Left ventricle myocardium superior (tissue), 1 donor: ENCODE measurements at regions of chr4 and their contacts with region 1.

Region 1: GRCh38 chr4:183261953-183262775 is 57.9 kb downstream of the CLDN22 start:
- DNase-seq: peak; percentile 82
- ATAC-seq: peak; percentile 98

Region 2: DNA sequence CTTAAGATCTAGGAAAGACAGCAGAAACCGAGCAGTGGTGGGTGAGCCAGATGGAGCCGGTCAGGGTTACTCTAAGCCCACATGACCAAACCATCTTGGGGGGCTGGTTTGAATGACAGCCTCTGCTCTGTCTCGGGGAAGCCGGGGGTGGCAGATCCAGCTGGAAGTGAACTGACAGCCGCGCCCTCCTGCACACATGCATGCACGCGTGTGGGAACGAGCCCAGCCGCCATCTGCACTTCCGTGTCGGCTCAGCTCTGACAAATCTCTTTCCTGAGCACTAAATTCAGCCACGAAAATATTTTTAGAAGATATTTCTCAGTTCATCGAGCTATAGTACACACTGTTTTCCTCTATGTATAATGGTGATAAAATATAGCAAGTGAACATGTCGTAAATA is 460.5 kb before region 1 on chr4:
- intact Hi-C with region 1: no loop called
- DNase-seq: no peak
- ATAC-seq: no peak

Region 3: GRCh38 chr4:182938205-182938645 is 323.9 kb before region 1 on chr4:
- intact Hi-C with region 1: loop called (anchors 2 kb)
- DNase-seq: peak; percentile 81
- ATAC-seq: peak; percentile 98

Region 4: DNA sequence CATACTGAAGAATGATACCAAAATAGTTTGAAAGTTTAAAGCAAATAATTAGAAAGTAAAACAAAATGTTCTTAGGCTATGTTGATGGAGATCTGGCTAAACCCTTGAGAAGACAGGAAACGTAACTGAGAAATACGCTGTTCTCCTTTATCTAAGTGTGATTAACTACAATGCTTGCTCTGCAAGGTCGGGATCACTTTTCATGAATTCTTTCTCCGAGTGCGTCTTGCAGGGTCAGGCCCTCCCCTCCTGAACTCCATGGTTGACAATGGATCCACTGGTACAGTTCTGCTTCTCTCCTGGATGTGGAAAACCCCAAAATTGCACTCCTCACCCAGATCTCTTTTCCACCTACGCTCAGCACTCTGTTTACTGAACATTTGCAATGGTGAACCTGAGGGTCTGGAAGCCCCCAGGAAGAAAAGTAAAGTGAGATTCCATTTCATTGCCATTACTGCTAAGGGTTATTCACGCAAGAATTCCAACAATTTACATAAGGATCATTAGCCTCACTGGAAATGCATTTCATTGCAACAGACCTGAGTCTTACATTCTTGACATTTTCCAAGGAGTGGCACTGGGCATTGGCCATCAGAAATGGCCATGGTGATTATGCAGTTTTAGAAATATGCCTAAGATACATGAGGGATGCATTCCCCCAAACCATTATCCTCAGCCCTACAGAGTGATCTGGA is 187.7 kb before region 1 on chr4:
- intact Hi-C with region 1: loop called (anchors 5 kb)
- DNase-seq: no peak
- ATAC-seq: no peak